Activated CD4-positive, alpha-beta T cell treated with anti-CD3 and anti-CD28 coated beads, Interleukin-2, amount 10 ng/mL, durations not matched to agents 24 days and 14 days (primary cell): ENCODE measurements at regions of chr12 and their contacts with region 1.

Region 1: GRCh38 chr12:112978163-112979040 is at the start of gene OAS2:
- DNase-seq: peak; percentile 96
- H3K4me3 Mint-ChIP-seq: peak within 1 kb of the TSS; percentile 91
- H3K27ac Mint-ChIP-seq: peak within 1 kb of the TSS; percentile 99
- H3K4me1 Mint-ChIP-seq: peaks cover 42% of the 10 kb centered on the region
- H3K27me3 Mint-ChIP-seq: no peaks in the 10 kb centered on the region
- total RNA-seq, gene OAS2: 111 and 118 TPM in 2 replicates

Region 2: GRCh38 chr12:112906712-112907414 is 71.5 kb before region 1 on chr12 and contains the start of gene OAS1:
- intact Hi-C with region 1: loop called (anchors 1 kb)
- DNase-seq: peak; percentile 88
- H3K4me3 Mint-ChIP-seq: peak within 1 kb of the TSS; percentile 100
- H3K27ac Mint-ChIP-seq: peak within 1 kb of the TSS; percentile 97
- H3K4me1 Mint-ChIP-seq: peaks cover 81% of the 10 kb centered on the region
- H3K27me3 Mint-ChIP-seq: no peaks in the 10 kb centered on the region
- total RNA-seq, gene OAS1: 24.5 and 28.0 TPM in 2 replicates

Region 3: DNA sequence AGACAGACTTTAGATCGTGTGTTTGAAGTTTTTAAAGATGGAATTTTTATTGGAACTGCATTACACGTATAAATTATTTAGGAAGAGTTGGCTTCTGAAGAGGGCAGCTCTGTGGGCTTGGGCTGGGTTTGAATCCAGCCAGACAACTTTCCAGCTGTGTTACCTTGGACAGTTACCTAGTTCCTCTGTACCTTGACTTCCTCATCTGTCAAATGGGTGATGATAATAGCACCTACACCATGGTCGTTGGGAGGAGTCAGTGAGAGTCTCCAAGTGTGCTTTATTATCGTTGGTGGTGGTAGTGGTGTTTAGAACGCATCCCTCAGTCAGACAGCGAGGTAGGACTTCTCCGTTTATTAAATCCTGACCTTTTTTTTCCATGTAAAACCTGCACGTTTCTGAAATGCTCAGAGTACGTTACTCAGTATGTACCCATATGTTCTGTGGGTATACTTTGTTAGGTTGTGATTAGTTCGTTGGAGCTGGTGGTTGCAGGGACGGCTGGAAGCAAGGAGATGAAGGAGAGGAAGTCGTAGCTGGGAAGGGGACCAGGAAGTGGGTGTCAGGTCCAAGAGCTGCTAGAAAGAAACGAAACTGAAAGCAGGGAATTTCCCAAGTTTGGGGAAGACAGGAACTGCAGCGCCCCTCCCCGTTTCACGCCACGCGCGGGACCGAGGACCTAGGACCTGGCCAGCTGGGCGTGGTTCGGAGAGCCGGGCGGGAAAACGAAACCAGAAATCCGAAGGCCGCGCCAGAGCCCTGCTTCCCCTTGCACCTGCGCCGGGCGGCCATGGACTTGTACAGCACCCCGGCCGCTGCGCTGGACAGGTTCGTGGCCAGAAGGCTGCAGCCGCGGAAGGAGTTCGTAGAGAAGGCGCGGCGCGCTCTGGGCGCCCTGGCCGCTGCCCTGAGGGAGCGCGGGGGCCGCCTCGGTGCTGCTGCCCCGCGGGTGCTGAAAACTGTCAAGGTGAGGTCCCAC is 40.4 kb before region 1 on chr12 and contains the start of gene OAS3:
- intact Hi-C with region 1: loop called (anchors 1 kb)
- DNase-seq: peak; percentile 95
- H3K4me3 Mint-ChIP-seq: peak within 1 kb of the TSS; percentile 89
- H3K27ac Mint-ChIP-seq: peak within 1 kb of the TSS; percentile 96
- H3K4me1 Mint-ChIP-seq: peaks cover 48% of the 10 kb centered on the region
- H3K27me3 Mint-ChIP-seq: no peaks in the 10 kb centered on the region
- total RNA-seq, gene OAS3: 47.5 and 48.9 TPM in 2 replicates

Region 4: DNA sequence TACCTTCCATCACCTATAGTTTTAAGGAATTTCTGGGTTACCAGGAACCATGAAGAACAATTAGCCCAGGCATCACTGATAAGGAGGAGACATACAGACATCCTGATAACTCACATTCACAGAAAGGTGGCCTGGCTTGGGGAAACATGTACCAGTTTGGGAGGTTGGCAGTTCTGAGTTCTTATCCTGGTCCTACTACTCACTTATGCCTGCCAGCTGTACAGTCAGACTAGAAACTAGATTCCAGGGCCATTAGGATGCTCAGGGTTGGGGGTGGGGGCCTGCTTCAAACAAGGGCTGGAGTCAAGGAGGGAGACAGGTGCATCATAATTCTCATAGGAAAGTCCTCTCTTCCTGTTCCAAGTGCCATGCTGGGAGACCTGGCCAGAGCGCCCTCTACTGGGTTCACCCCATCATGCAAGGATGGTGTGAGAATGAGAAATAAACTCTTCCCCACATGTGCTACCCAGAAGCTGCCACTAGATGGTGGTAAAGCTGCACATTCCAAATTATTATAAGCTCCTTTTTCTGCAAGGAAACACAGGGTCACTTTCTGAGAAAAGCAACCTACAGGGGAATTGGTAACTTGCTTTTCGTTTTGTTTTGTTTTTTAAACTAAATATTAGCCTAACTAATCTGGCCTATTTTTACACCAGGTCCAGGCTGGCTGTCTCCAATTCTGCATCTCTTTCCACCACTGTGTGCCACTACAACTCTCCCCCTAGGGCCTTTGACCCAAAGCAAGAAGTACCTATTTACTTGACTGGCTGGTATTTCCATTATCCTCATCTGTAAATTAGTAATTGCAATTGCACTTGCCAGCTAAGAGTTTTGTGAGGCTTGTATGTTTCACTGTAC is 14.4 kb after region 1 on chr12:
- intact Hi-C with region 1: loop called (anchors 1 kb)
- DNase-seq: peak; percentile 88
- H3K4me3 Mint-ChIP-seq: no peak overlapping the region
- H3K27ac Mint-ChIP-seq: peak overlapping the region; percentile 51
- H3K4me1 Mint-ChIP-seq: peaks cover 41% of the 10 kb centered on the region
- H3K27me3 Mint-ChIP-seq: no peaks in the 10 kb centered on the region

Region 5: DNA sequence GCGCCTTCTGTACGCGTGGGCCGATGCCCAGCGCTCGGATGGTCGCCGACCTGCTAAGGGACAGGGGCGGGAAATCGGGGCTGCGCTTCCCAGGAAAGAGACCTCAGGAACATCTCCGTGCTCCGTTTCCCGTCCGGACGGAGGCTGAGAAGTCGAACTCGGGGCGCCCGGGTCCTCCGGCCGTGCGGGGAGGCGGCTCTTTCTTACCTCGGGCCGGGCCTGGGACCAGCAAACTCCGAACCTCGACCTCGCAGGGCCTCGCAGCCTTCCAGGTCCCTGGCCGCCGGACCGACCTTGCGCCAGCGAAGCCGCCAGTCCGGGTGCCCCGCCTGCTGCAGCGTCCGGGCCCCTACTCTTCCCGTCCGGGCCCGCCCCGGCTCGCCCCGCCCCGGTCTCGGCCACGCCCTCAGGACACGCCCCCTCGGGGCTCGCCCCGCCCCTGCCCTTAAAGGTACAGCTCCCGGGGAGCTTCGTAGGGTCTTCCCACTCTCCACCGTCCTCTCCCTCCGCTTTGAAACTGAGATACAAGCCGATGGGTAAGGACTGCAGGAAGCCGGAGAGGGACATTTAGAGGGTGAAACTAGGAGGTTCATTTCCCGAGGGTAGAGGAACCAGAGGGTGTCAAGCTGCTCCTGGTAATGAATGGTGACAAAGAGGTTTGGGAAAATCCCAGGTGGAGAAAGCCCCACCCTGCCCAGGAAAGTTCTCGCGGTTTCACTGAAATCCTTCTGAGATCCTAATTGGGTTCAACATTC is 356.6 kb after region 1 on chr12 and contains the start of gene SLC8B1:
- intact Hi-C with region 1: loop called (anchors 10 kb)
- DNase-seq: peak; percentile 96
- H3K4me3 Mint-ChIP-seq: peak within 1 kb of the TSS; percentile 97
- H3K27ac Mint-ChIP-seq: peak within 1 kb of the TSS; percentile 78
- H3K4me1 Mint-ChIP-seq: peaks cover 22% of the 10 kb centered on the region
- H3K27me3 Mint-ChIP-seq: no peaks in the 10 kb centered on the region
- total RNA-seq, gene SLC8B1: 19.5 and 20.0 TPM in 2 replicates